Activated CD4-positive, alpha-beta T cell treated with anti-CD3 and anti-CD28 coated beads, Interleukin-2, amount 10 ng/mL, durations not matched to agents 24 days and 14 days (primary cell): ENCODE measurements at regions of chr9 and their contacts with region 1.

Region 1: GRCh38 chr9:79571309-79572031 is at the start of gene TLE4:
- DNase-seq: peak; percentile 100
- H3K4me3 Mint-ChIP-seq: no peak within 1 kb of the TSS
- H3K27ac Mint-ChIP-seq: peak within 1 kb of the TSS; percentile 66
- H3K4me1 Mint-ChIP-seq: peaks cover 28% of the 10 kb centered on the region
- H3K27me3 Mint-ChIP-seq: peaks cover 20% of the 10 kb centered on the region
- total RNA-seq, gene TLE4: 12.1 and 13.9 TPM in 2 replicates

Region 2: DNA sequence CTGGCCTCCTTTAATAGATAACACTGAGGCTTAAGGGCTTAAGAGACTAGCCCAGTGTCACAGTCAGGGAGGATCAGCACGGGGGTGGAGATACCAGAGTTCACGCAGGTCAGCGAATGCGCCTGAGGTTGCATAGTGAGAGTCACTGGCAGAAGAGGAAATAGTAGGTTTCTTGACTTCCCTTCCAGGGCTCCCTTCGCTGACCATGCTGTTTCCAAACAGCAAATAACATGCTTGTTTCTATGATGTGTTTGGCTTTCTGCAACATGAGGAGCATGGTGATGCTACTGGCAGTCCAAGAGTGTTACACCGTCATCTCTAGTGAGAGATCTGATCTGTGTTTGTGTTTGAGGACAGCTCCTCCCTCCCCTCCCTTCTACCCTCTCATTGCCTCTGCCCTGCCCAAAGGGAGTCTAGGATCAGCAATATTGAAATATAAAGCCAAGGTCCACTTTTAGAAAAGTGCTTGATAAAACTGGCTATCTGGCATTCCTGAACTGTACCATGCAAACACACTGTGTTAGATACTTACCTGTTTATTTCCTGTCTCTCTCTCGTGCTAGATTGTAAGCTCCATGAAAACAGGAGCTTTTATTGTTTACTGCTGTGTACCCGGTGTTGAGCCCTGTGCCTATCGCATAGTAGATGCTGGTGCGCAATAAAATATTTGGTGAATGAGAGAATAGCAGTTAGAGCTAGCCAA is 12.6 kb after region 1 on chr9:
- intact Hi-C with region 1: loop called (anchors 1 kb)
- DNase-seq: peak; percentile 70
- H3K4me3 Mint-ChIP-seq: peak overlapping the region; percentile 13
- H3K27ac Mint-ChIP-seq: no peak overlapping the region
- H3K4me1 Mint-ChIP-seq: peaks cover 37% of the 10 kb centered on the region
- H3K27me3 Mint-ChIP-seq: no peaks in the 10 kb centered on the region

Region 3: DNA sequence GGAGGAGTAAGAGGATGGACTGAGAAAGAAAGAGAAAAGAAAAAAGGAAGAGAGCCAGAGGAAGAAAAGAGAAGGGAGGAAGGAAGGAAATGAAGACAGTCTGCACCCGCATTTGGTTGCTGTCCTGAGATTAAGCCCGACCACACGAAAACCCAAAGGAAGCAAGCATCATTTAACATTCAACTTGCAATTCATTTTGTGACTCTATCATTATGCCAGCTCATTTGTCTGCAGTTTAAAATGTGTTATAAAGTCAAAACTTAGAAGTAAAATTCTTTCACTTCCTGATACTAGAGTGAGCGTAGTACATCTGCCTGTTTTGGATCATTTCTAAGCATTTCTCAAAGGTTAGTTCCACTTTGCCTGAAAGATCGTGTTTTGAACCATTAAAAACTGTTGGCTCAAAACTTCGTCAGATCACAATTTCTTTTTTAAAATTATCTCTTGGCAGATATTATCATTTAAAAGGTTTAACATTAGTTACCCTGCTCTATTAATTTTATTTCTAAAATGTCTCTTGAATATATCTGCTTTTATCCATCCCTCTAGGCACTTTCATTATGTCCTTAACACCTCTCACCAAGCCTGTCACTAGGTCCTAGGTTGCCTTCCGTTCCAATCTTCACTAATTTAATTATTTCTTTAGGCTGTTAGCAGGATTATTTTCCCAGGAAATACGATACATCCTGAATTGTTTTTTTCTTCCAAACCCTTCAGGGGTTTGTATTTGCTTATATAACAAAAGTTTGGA is 241.2 kb after region 1 on chr9:
- intact Hi-C with region 1: loop called (anchors 2 kb)
- DNase-seq: peak; percentile 62
- H3K4me3 Mint-ChIP-seq: peak overlapping the region; percentile 72
- H3K27ac Mint-ChIP-seq: no peak overlapping the region
- H3K4me1 Mint-ChIP-seq: peaks cover 17% of the 10 kb centered on the region
- H3K27me3 Mint-ChIP-seq: peaks cover 6% of the 10 kb centered on the region